ENCODE measurements at regions of chr14 and their contacts with region 1.

Region 1: DNA sequence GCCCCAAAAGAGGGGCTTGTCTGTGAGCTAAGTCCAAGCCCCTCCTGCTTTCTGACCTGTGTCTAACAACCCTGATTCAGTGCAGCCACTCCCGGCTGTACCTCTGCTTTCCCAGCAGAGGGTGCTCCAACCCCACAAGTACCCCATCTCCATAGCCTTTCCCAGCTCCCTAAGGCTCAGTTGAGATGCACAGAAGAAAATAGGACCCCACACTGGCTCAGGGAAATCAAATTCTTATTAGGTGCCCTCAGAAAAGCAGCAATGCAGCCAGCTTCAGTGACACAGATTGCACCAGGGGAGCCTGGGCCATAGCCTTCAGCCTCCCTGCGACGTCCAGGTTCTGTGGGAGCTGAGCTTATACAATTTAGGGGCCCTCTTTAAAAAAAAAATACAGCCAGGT is 49.9 kb downstream of the LRRC74A start:
- DNase-seq: peak; percentile 85

Region 2: GRCh38 chr14:76887196-76887595 is 11.1 kb after region 1 on chr14:
- CTCF ChIA-PET with region 1: interaction called, 17 read pairs
- POLR2A ChIA-PET with region 1: no interaction called
- DNase-seq: no peak

Region 3: GRCh38 chr14:76918751-76919543 is 42.9 kb after region 1 on chr14:
- CTCF ChIA-PET with region 1: interaction called, 22 read pairs
- POLR2A ChIA-PET with region 1: no interaction called
- DNase-seq: peak; percentile 69

Region 4: DNA sequence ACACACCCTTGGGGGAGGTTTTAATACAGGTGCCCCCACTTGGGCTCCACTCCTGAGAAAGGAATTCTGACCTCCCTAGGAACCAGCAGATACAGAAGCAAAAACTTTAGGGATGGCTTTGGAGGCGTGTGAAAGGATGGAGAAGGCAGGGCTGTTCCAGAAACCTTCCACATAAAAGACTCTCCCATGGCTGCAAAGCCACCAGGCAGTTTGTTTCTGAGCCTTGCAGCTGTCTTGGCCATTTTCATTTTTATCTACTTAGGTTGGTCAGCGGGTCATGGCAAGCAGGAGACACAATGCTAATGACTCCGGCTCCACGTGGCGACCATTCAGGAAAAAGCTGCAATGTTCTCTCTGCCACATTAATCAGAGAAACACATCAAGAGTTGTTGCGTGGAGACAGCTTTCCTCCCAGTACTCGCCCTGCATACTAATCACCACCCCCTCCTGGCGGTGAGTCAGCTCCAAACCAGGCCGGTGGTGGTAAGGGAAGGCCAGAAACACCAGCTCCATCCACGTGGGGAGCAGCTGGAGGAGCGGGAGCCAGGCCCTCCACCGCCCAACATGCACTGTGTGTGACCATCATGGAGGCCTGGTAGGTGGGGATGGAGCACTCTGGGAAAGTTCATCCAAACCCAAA is 183.3 kb after region 1 on chr14:
- CTCF ChIA-PET with region 1: interaction called, 30 read pairs
- POLR2A ChIA-PET with region 1: interaction called, 3 read pairs
- DNase-seq: peak; percentile 71

Region 5: GRCh38 chr14:77067632-77068514 is 191.8 kb after region 1 on chr14:
- CTCF ChIA-PET with region 1: interaction called, 177 read pairs
- POLR2A ChIA-PET with region 1: interaction called, 3 read pairs
- DNase-seq: peak; percentile 76

Region 6: DNA sequence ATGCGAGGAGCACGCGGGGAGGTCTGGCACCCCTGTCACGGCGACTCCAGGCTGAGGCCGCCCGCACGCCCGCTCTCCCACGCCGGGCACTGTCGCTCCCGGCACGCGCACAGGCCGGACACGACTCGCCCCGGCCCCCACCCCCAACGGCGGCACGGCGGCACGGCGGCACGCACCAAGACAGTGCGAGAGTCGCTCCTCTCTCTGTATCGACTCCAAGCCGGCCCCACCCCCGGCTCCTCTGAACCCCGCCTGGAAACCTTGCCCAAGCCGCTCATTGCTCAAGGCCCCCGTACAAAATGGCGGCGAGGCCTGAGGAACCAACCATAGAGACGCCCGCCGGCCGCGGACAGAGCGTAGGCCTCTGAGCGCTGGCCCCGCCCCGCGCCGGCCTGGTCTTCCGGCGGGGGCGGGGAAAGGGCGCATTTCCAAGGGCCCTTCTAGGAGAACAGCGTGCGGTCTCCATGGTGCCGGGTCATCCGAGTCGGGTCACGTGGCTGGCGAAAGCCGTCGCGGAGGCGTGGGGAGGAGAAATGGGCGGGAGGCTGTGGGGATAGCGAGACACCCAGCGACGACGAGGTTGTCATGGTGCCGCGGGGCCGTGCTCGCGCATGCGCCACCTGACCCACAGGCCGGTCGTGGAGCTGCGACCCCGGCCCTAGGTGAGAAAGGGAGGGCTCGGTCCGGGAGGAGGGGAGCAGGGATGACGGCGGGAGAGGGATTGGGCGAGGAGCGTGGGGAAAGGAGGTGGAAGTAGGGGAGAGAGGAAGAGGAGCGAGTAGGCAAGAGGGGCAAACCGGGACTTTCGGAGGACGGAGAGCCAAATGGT is 221.8 kb after region 1 on chr14 and contains the start of gene CIPC:
- CTCF ChIA-PET with region 1: interaction called, 17 read pairs
- POLR2A ChIA-PET with region 1: interaction called, 7 read pairs
- DNase-seq: peak; percentile 97

Measured in HEK293T (cell line).